ENCODE measurements at regions of chr19 and their contacts with region 1.

Region 1: DNA sequence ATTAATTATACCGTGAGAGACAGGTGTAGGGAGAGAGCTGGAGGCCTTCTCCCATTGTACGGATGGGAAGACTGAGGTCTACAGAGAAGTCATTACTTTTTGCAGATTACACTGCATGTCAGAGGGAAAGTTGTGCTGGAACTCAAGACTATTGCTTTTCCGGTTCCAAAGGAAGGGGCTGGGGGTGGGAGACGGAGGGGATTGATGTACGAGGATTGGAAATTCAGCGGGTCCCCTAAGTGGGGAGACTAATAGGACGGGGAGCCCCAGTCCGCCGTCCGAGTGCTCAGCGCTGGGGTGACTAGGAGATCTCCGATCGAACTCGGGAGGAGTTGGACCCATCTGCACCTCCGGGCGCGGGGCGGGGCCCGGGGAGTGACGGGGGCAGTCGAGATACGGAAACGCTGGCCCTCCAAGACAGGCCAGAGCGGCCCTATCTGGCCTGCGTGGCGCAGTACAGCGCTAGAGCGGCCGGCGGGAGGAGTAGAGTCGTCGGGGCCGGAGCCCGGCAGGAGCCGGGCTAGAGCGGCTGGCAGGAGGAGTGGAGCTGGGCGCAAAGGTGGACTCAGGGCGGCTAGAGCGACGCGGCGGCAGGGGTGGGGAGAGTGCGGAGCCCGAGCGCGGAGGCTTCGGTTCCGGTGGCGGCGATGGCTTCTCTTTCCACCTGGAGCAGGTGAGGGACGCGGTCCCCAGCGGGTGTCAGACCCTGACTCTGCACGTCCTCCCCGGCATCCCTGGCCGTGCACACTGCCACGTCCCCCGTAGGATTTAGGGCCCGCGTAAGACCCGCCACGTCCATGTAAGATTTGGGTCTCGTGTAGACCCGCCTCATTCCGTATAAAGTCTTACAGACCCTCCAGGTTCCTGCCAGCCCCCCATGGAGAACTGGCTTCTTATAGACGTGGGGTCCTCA is 1.1 kb downstream of the ARHGEF1 start:
- DNase-seq: peak; percentile 98
- H3K4me3 Mint-ChIP-seq: peak overlapping the region; percentile 73
- H3K27ac Mint-ChIP-seq: peak overlapping the region; percentile 73
- H3K4me1 Mint-ChIP-seq: peaks cover 53% of the 10 kb centered on the region
- H3K27me3 Mint-ChIP-seq: peaks cover 16% of the 10 kb centered on the region
- CTCF ChIP-seq: no peak

Region 2: GRCh38 chr19:41859618-41860418 is 24.3 kb before region 1 on chr19 and contains the start of gene RPS19:
- CTCF ChIA-PET with region 1: interaction called, 10 read pairs
- intact Hi-C with region 1: no loop called
- DNase-seq: peak; percentile 98
- H3K4me3 Mint-ChIP-seq: peak within 1 kb of the TSS; percentile 80
- H3K27ac Mint-ChIP-seq: peak within 1 kb of the TSS; percentile 86
- H3K4me1 Mint-ChIP-seq: peaks cover 34% of the 10 kb centered on the region
- H3K27me3 Mint-ChIP-seq: peaks cover 8% of the 10 kb centered on the region
- CTCF ChIP-seq: peak; percentile 87
- total RNA-seq, gene RPS19: 2,051 and 2,220 TPM in 2 replicates

Region 3: GRCh38 chr19:41904118-41904870 is 20.2 kb after region 1 on chr19:
- CTCF ChIA-PET with region 1: no interaction called
- intact Hi-C with region 1: loop called (anchors 2 kb)
- DNase-seq: peak; percentile 91
- H3K4me3 Mint-ChIP-seq: peak overlapping the region; percentile 43
- H3K27ac Mint-ChIP-seq: peak overlapping the region; percentile 70
- H3K4me1 Mint-ChIP-seq: peaks cover 41% of the 10 kb centered on the region
- H3K27me3 Mint-ChIP-seq: no peaks in the 10 kb centered on the region
- CTCF ChIP-seq: no peak

Region 4: DNA sequence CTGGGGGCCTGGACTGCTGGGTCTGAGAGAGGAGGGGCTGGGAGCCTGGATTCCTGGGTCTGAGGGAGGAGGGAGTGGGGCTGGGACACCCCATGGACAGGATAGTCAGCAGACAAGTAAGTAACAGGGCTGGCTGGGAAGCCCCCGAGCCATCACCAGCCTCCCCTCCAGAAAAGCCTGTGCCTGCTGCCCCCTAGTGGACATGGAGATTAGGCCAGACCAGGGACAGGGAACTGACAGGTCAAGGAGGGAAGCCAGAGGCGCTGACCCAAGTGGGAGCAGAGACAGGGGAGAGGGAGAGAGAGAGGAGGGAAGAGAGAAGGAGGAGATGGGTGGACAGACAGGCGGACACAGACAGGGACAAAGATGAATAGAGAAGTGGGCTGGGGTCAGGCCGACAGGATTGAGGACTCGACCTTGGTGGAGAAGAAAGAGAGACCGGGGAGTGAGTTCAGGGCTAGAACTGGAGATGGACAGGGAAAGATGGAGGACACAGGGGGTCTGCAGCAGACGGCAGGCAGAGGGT is 50.8 kb after region 1 on chr19:
- CTCF ChIA-PET with region 1: interaction called, 4 read pairs
- intact Hi-C with region 1: loop called (anchors 2 kb)
- DNase-seq: peak; percentile 88
- H3K4me3 Mint-ChIP-seq: no peak overlapping the region
- H3K27ac Mint-ChIP-seq: no peak overlapping the region
- H3K4me1 Mint-ChIP-seq: peaks cover 20% of the 10 kb centered on the region
- H3K27me3 Mint-ChIP-seq: peaks cover under 1% of the 10 kb centered on the region
- CTCF ChIP-seq: peak; percentile 86

Measured in Calu3 (cell line).